ENCODE measurements at regions of chr2 and their contacts with region 1.

Region 1: GRCh38 chr2:117470311-117471095 is 344.0 kb upstream of the DDX18 start:
- DNase-seq: peak in 1 of 5 donors; percentile 20
- ATAC-seq: peak in 1 of 4 donors; percentile 24
- H3K4me3 ChIP-seq: no peak overlapping the region
- H3K27ac ChIP-seq: no peak overlapping the region
- H3K4me1 ChIP-seq: no peaks in the 10 kb centered on the region
- H3K27me3 ChIP-seq: no peaks in the 10 kb centered on the region
- CTCF ChIP-seq: peak; percentile 24 to 63 (median 44)
- POLR2A ChIP-seq: no peak

Region 2: DNA sequence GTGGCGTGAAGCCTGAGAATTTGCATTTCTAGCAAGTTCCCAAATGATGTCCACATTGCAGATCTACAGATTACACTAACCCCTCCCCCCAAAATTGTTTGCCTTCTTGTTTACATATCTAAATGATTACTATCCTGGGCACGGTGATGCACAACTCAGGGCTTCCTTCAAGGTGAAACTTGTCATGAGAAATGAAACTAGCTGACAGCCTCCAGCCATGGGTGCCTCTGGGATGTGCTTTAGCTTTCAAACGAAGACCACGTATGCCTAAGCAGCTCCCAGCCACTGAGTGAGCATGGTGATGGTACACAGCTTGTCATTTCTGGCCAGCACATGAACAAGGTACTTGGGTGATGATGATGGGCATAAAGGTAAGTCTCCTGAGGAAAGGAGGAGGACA is 120.8 kb before region 1 on chr2:
- intact Hi-C with region 1: no loop called
- DNase-seq: no peak
- ATAC-seq: no peak
- H3K4me3 ChIP-seq: no peak overlapping the region
- H3K27ac ChIP-seq: no peak overlapping the region
- H3K4me1 ChIP-seq: no peaks in the 10 kb centered on the region
- H3K27me3 ChIP-seq: no peaks in the 10 kb centered on the region
- CTCF ChIP-seq: no peak
- POLR2A ChIP-seq: no peak

Region 3: GRCh38 chr2:117536139-117536538 is 65.6 kb after region 1 on chr2:
- intact Hi-C with region 1: loop called in 2 of 10 experiments (anchors 5 kb)
- DNase-seq: no peak
- ATAC-seq: no peak
- H3K4me3 ChIP-seq: no peak overlapping the region
- H3K27ac ChIP-seq: no peak overlapping the region
- H3K4me1 ChIP-seq: no peaks in the 10 kb centered on the region
- H3K27me3 ChIP-seq: no peaks in the 10 kb centered on the region
- CTCF ChIP-seq: peak in 7 of 12 donors; percentile 13 to 51 (median 28)
- POLR2A ChIP-seq: no peak

Region 4: DNA sequence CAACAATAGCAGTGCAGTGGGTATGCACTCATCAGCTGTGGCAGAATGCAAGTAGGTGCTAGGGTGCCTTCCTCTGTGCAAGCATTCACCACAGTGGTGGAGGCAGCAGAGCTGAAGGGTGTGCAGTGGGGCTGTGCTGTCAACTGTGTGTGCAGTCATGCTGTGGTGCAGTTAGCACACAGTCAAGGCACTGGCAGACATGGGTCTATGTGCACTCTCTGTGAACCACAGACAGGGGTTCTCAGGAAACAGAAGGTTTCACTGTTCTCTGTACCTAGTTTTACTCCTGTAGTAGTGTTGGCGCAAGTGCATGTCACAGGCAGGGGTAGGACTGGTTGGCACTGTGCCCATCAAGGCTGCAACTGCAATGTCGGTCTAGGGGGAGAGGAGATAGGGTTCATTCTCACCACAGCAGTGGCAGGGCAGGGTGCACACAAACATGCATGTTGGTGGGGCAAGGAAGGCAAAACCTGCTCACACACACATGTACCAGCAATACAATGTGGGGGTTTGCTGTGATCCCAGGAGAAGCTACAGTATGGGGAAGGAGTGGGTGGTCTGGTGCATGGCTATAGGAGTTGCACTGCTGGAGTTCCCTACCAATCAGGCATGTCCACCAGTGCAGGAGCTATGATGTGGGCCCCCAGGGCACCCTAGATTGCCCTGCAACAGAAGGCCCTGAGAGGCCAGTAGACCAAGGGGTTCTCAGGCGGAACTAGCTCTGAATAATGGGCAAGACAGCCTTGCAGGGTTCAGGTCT is 101.3 kb after region 1 on chr2:
- intact Hi-C with region 1: no loop called
- DNase-seq: peak in 1 of 5 donors; percentile 31
- ATAC-seq: no peak
- H3K4me3 ChIP-seq: no peak overlapping the region
- H3K27ac ChIP-seq: no peak overlapping the region
- H3K4me1 ChIP-seq: no peaks in the 10 kb centered on the region
- H3K27me3 ChIP-seq: no peaks in the 10 kb centered on the region
- CTCF ChIP-seq: no peak
- POLR2A ChIP-seq: no peak

Region 5: GRCh38 chr2:117771969-117772630 is 301.6 kb after region 1 on chr2:
- intact Hi-C with region 1: loop called in 5 of 10 experiments (anchors 2 to 5 kb)
- DNase-seq: no peak
- ATAC-seq: no peak
- H3K4me3 ChIP-seq: no peak overlapping the region
- H3K27ac ChIP-seq: no peak overlapping the region
- H3K4me1 ChIP-seq: no peaks in the 10 kb centered on the region
- H3K27me3 ChIP-seq: peaks cover 0 to 8% (median 0%) of the 10 kb centered on the region in 9 donors
- CTCF ChIP-seq: peak in 7 of 12 donors; percentile 15 to 51 (median 40)
- POLR2A ChIP-seq: no peak

Region 6: GRCh38 chr2:117785740-117786139 is 315.2 kb after region 1 on chr2:
- intact Hi-C with region 1: loop called in 4 of 10 experiments (anchors 5 kb)
- DNase-seq: peak in 1 of 5 donors; percentile 11
- ATAC-seq: no peak
- H3K4me3 ChIP-seq: no peak overlapping the region
- H3K27ac ChIP-seq: no peak overlapping the region
- H3K4me1 ChIP-seq: no peaks in the 10 kb centered on the region
- H3K27me3 ChIP-seq: peaks cover 0 to 6% (median 0%) of the 10 kb centered on the region in 9 donors
- CTCF ChIP-seq: peak; percentile 47 to 70 (median 60)
- POLR2A ChIP-seq: no peak